A673 (cell line): ENCODE measurements at regions of chr2 and their contacts with region 1.

Region 1: GRCh38 chr2:85911097-85911496 is 22.3 kb upstream of the ST3GAL5 start:
- DNase-seq: peak; percentile 26
- H3K4me3 ChIP-seq: no peak overlapping the region
- H3K27ac ChIP-seq: no peak overlapping the region
- H3K4me1 ChIP-seq: peaks cover 10% of the 10 kb centered on the region
- H3K27me3 ChIP-seq: no peaks in the 10 kb centered on the region
- CTCF ChIP-seq: no peak

Region 2: GRCh38 chr2:86123328-86123925 is 212.3 kb after region 1 on chr2:
- CTCF ChIA-PET with region 1: no interaction called
- POLR2A ChIA-PET with region 1: no interaction called
- intact Hi-C with region 1: no loop called
- DNase-seq: no peak
- H3K4me3 ChIP-seq: no peak overlapping the region
- H3K27ac ChIP-seq: no peak overlapping the region
- H3K4me1 ChIP-seq: no peaks in the 10 kb centered on the region
- H3K27me3 ChIP-seq: no peaks in the 10 kb centered on the region
- CTCF ChIP-seq: no peak

Region 3: GRCh38 chr2:86140969-86141392 is 229.9 kb after region 1 on chr2:
- CTCF ChIA-PET with region 1: no interaction called
- POLR2A ChIA-PET with region 1: interaction called, 11 read pairs
- intact Hi-C with region 1: no loop called
- DNase-seq: no peak
- H3K4me3 ChIP-seq: no peak overlapping the region
- H3K27ac ChIP-seq: no peak overlapping the region
- H3K4me1 ChIP-seq: no peaks in the 10 kb centered on the region
- H3K27me3 ChIP-seq: no peaks in the 10 kb centered on the region
- CTCF ChIP-seq: no peak